Naive thymus-derived CD4-positive, alpha-beta T cell (primary cell): ENCODE measurements at regions of chr6 and their contacts with region 1.

Region 1: DNA sequence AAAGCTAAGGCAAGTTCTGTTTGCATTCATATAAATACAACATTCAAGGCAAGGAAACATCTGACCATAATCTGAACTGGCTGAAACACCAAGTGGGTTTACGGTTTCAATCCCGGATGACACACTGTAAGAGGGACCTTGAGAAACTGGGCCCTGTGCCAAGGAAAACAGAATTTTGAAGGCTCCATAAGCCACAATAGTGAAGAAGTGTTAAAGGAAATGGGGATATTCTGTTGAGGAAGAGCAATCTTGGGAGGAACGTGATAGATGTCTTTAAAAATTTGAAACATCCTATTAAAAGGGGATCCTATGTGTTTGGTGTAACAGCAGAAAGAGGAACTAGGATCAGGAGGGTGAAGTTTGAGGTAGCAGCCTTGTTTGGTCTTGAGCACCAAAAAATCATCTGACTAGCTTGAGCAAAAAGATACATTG is 82.4 kb upstream of the TAB2 start:
- DNase-seq: no peak
- ATAC-seq: no peak
- H3K4me3 ChIP-seq: no peak overlapping the region
- H3K4me3 Mint-ChIP-seq: peak overlapping the region in 8 of 10 donors; percentile 38 to 85 (median 76)
- H3K27ac ChIP-seq: peak overlapping the region; percentile 9
- H3K27ac Mint-ChIP-seq: peak overlapping the region; percentile 5 to 99 (median 95)
- H3K4me1 ChIP-seq: peaks cover 30 to 40% of the 10 kb centered on the region in 2 donors
- H3K4me1 Mint-ChIP-seq: peaks cover 35 to 67% (median 51%) of the 10 kb centered on the region in 7 donors
- H3K27me3 ChIP-seq: no peaks in the 10 kb centered on the region
- H3K27me3 Mint-ChIP-seq: no peaks in the 10 kb centered on the region

Region 2: GRCh38 chr6:149082286-149082707 is 152.8 kb before region 1 on chr6:
- CTCF ChIA-PET with region 1: interaction called, 3 read pairs
- POLR2A ChIA-PET with region 1: no interaction called
- intact Hi-C with region 1: loop called (anchors 1 kb)
- DNase-seq: peak; percentile 59 to 84 (median 76)
- ATAC-seq: peak; percentile 97
- H3K4me3 ChIP-seq: no peak overlapping the region
- H3K4me3 Mint-ChIP-seq: peak overlapping the region in 2 of 10 donors; percentile 18 to 72
- H3K27ac ChIP-seq: no peak overlapping the region
- H3K27ac Mint-ChIP-seq: peak overlapping the region in 5 of 9 donors; percentile 4 to 90 (median 52)
- H3K4me1 ChIP-seq: peaks cover 16 to 25% of the 10 kb centered on the region in 2 donors
- H3K4me1 Mint-ChIP-seq: peaks cover 10 to 88% (median 39%) of the 10 kb centered on the region in 7 donors
- H3K27me3 ChIP-seq: no peaks in the 10 kb centered on the region
- H3K27me3 Mint-ChIP-seq: no peaks in the 10 kb centered on the region

Region 3: GRCh38 chr6:149118737-149119653 is 116.2 kb before region 1 on chr6:
- CTCF ChIA-PET with region 1: no interaction called
- POLR2A ChIA-PET with region 1: no interaction called
- intact Hi-C with region 1: no loop called
- DNase-seq: no peak
- ATAC-seq: no peak
- H3K4me3 ChIP-seq: no peak overlapping the region
- H3K4me3 Mint-ChIP-seq: peak overlapping the region in 1 of 10 donors; percentile 29
- H3K27ac ChIP-seq: no peak overlapping the region
- H3K27ac Mint-ChIP-seq: peak overlapping the region in 2 of 9 donors; percentile 65 to 79
- H3K4me1 ChIP-seq: peaks cover 0 to 5% of the 10 kb centered on the region in 2 donors
- H3K4me1 Mint-ChIP-seq: peaks cover 17 to 83% (median 36%) of the 10 kb centered on the region in 7 donors
- H3K27me3 ChIP-seq: no peaks in the 10 kb centered on the region
- H3K27me3 Mint-ChIP-seq: no peaks in the 10 kb centered on the region

Region 4: GRCh38 chr6:149147938-149148718 is 87.0 kb before region 1 on chr6:
- CTCF ChIA-PET with region 1: no interaction called
- POLR2A ChIA-PET with region 1: interaction called, 3 read pairs
- intact Hi-C with region 1: loop called in 1 of 2 experiments (anchors 2 kb)
- DNase-seq: peak in 7 of 9 donors; percentile 31 to 82 (median 56)
- ATAC-seq: peak; percentile 91
- H3K4me3 ChIP-seq: no peak overlapping the region
- H3K4me3 Mint-ChIP-seq: peak overlapping the region in 7 of 10 donors; percentile 7 to 69 (median 54)
- H3K27ac ChIP-seq: peak overlapping the region; percentile 64
- H3K27ac Mint-ChIP-seq: peak overlapping the region; percentile 80 to 97 (median 85)
- H3K4me1 ChIP-seq: peaks cover 26 to 29% of the 10 kb centered on the region in 2 donors
- H3K4me1 Mint-ChIP-seq: peaks cover 35 to 88% (median 55%) of the 10 kb centered on the region in 7 donors
- H3K27me3 ChIP-seq: no peaks in the 10 kb centered on the region
- H3K27me3 Mint-ChIP-seq: no peaks in the 10 kb centered on the region

Region 5: GRCh38 chr6:149211046-149211571 is 24.0 kb before region 1 on chr6:
- CTCF ChIA-PET with region 1: no interaction called
- POLR2A ChIA-PET with region 1: interaction called, 4 read pairs
- intact Hi-C with region 1: loop called in 1 of 2 experiments (anchors 1 kb)
- DNase-seq: peak in 1 of 9 donors; percentile 34
- ATAC-seq: peak; percentile 71
- H3K4me3 ChIP-seq: no peak overlapping the region
- H3K4me3 Mint-ChIP-seq: peak overlapping the region in 8 of 10 donors; percentile 15 to 70 (median 46)
- H3K27ac ChIP-seq: no peak overlapping the region
- H3K27ac Mint-ChIP-seq: peak overlapping the region in 5 of 9 donors; percentile 17 to 91 (median 59)
- H3K4me1 ChIP-seq: peaks cover 26 to 34% of the 10 kb centered on the region in 2 donors
- H3K4me1 Mint-ChIP-seq: peaks cover 6 to 28% (median 14%) of the 10 kb centered on the region in 7 donors
- H3K27me3 ChIP-seq: no peaks in the 10 kb centered on the region
- H3K27me3 Mint-ChIP-seq: no peaks in the 10 kb centered on the region

Region 6: GRCh38 chr6:149264629-149265028 is 29.5 kb after region 1 on chr6:
- CTCF ChIA-PET with region 1: interaction called, 3 read pairs
- POLR2A ChIA-PET with region 1: interaction called, 4 read pairs
- intact Hi-C with region 1: loop called in 1 of 2 experiments (anchors 1 kb)
- DNase-seq: peak in 8 of 9 donors; percentile 42 to 65 (median 50)
- ATAC-seq: peak; percentile 69
- H3K4me3 ChIP-seq: no peak overlapping the region
- H3K4me3 Mint-ChIP-seq: peak overlapping the region; percentile 29 to 76 (median 67)
- H3K27ac ChIP-seq: no peak overlapping the region
- H3K27ac Mint-ChIP-seq: peak overlapping the region; percentile 49 to 87 (median 74)
- H3K4me1 ChIP-seq: peaks cover 0 to 54% of the 10 kb centered on the region in 2 donors
- H3K4me1 Mint-ChIP-seq: peaks cover 33 to 59% (median 52%) of the 10 kb centered on the region in 7 donors
- H3K27me3 ChIP-seq: no peaks in the 10 kb centered on the region
- H3K27me3 Mint-ChIP-seq: no peaks in the 10 kb centered on the region

Region 7: DNA sequence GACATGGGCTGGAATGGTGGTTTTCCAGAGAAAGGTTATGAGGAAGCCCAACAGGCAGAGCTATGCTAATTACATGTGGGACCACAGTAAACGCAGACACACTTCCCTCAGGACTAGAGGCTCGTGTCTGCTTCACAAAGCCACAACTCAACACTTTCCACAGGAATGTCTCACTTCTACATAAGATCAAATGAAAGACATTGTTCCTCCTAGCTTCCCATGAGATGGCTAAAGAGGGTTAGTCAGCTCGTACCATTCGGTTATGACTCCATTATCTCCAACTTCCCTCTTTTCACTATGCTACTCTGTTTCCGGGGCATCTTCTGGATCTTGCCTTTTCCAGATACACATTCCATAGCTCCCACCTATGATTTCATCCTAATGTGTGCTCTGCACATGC is 278.8 kb after region 1 on chr6:
- CTCF ChIA-PET with region 1: interaction called, 3 read pairs
- POLR2A ChIA-PET with region 1: no interaction called
- intact Hi-C with region 1: loop called in 1 of 2 experiments (anchors 5 kb)
- DNase-seq: no peak
- ATAC-seq: peak; percentile 31
- H3K4me3 ChIP-seq: no peak overlapping the region
- H3K4me3 Mint-ChIP-seq: no peak overlapping the region
- H3K27ac ChIP-seq: no peak overlapping the region
- H3K27ac Mint-ChIP-seq: peak overlapping the region in 7 of 9 donors; percentile 42 to 72 (median 56)
- H3K4me1 ChIP-seq: peaks cover 13 to 16% of the 10 kb centered on the region in 2 donors
- H3K4me1 Mint-ChIP-seq: peaks cover 8 to 44% (median 43%) of the 10 kb centered on the region in 7 donors
- H3K27me3 ChIP-seq: no peaks in the 10 kb centered on the region
- H3K27me3 Mint-ChIP-seq: no peaks in the 10 kb centered on the region